Activated CD8-positive, alpha-beta memory T cell treated with anti-CD3 and anti-CD28 coated beads, Interleukin-2, amount 10 ng/mL, durations not matched to agents 7 days and 5 days (primary cell): ENCODE measurements at regions of chr15 and their contacts with region 1.

Region 1: GRCh38 chr15:72722071-72722696 is 36.2 kb downstream of the BBS4 start:
- DNase-seq: peak; percentile 79
- ATAC-seq: peak; percentile 63
- H3K4me3 Mint-ChIP-seq: no peak overlapping the region
- H3K27ac Mint-ChIP-seq: no peak overlapping the region
- H3K4me1 Mint-ChIP-seq: no peaks in the 10 kb centered on the region
- H3K27me3 Mint-ChIP-seq: no peaks in the 10 kb centered on the region

Region 2: GRCh38 chr15:72732516-72732915 is 10.3 kb after region 1 on chr15:
- CTCF ChIA-PET with region 1: interaction called, 14 read pairs
- DNase-seq: no peak
- ATAC-seq: no peak
- H3K4me3 Mint-ChIP-seq: no peak overlapping the region
- H3K27ac Mint-ChIP-seq: no peak overlapping the region
- H3K4me1 Mint-ChIP-seq: peaks cover 9% of the 10 kb centered on the region
- H3K27me3 Mint-ChIP-seq: no peaks in the 10 kb centered on the region

Region 3: GRCh38 chr15:72749700-72750099 is 27.5 kb after region 1 on chr15:
- CTCF ChIA-PET with region 1: interaction called, 11 read pairs
- DNase-seq: no peak
- ATAC-seq: no peak
- H3K4me3 Mint-ChIP-seq: no peak overlapping the region
- H3K27ac Mint-ChIP-seq: no peak overlapping the region
- H3K4me1 Mint-ChIP-seq: peaks cover 20% of the 10 kb centered on the region
- H3K27me3 Mint-ChIP-seq: no peaks in the 10 kb centered on the region

Region 4: DNA sequence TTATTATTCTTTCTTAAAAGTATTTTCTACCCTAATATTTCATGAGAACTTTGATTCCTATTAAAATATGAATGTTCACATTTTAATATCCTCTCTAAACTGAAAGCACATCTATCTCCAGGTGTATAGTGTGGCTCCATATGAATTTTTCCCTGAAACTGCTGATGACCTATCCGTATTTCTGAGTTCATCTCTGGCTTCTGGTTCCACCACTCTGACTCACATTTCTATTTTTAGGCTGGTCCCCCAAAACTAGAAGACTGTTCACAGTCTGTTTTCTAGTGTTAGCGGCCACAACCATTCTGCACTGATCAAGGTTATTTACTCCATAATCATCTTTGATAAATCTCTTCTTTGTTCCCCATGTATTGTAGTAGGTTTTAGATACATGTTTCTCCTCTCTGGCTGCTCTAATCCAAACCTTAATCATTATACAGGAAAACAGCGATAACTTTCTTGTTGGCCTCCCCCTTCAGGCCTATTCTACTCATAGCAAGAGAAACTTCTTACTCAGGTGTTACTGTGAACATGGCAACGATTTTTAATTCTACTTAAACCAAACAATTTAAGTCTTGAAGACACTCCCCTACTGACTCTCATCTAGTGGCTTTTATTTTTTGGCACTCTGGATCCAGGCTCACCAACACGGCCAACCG is 48.6 kb after region 1 on chr15:
- CTCF ChIA-PET with region 1: interaction called, 13 read pairs
- DNase-seq: peak; percentile 33
- ATAC-seq: peak; percentile 57
- H3K4me3 Mint-ChIP-seq: no peak overlapping the region
- H3K27ac Mint-ChIP-seq: peak overlapping the region; percentile 63
- H3K4me1 Mint-ChIP-seq: peaks cover 29% of the 10 kb centered on the region
- H3K27me3 Mint-ChIP-seq: no peaks in the 10 kb centered on the region